Naive thymus-derived CD4-positive, alpha-beta T cell (primary cell): ENCODE measurements at regions of chr19 and their contacts with region 1.

Region 1: GRCh38 chr19:3035542-3036118 is 6.5 kb upstream of the TLE2 start:
- DNase-seq: peak; percentile 77 to 97 (median 95)
- ATAC-seq: peak; percentile 95
- H3K4me3 ChIP-seq: peak overlapping the region; percentile 95
- H3K4me3 Mint-ChIP-seq: peak overlapping the region; percentile 88 to 97 (median 94)
- H3K27ac ChIP-seq: peak overlapping the region; percentile 76
- H3K27ac Mint-ChIP-seq: peak overlapping the region; percentile 92 to 99 (median 98)
- H3K4me1 ChIP-seq: peaks cover 11 to 16% of the 10 kb centered on the region in 2 donors
- H3K4me1 Mint-ChIP-seq: peaks cover 21 to 44% (median 31%) of the 10 kb centered on the region in 7 donors
- H3K27me3 ChIP-seq: no peaks in the 10 kb centered on the region
- H3K27me3 Mint-ChIP-seq: peaks cover 0 to 41% (median 0%) of the 10 kb centered on the region in 5 donors

Region 2: GRCh38 chr19:2517868-2518625 is 517.6 kb before region 1 on chr19:
- CTCF ChIA-PET with region 1: no interaction called
- POLR2A ChIA-PET with region 1: no interaction called
- intact Hi-C with region 1: no loop called
- DNase-seq: peak in 1 of 9 donors; percentile 16
- ATAC-seq: no peak
- H3K4me3 ChIP-seq: no peak overlapping the region
- H3K4me3 Mint-ChIP-seq: peak overlapping the region in 3 of 10 donors; percentile 25 to 31 (median 29)
- H3K27ac ChIP-seq: no peak overlapping the region
- H3K27ac Mint-ChIP-seq: no peak overlapping the region
- H3K4me1 ChIP-seq: no peaks in the 10 kb centered on the region
- H3K4me1 Mint-ChIP-seq: peaks cover 0 to 8% (median 0%) of the 10 kb centered on the region in 7 donors
- H3K27me3 ChIP-seq: no peaks in the 10 kb centered on the region
- H3K27me3 Mint-ChIP-seq: no peaks in the 10 kb centered on the region

Region 3: DNA sequence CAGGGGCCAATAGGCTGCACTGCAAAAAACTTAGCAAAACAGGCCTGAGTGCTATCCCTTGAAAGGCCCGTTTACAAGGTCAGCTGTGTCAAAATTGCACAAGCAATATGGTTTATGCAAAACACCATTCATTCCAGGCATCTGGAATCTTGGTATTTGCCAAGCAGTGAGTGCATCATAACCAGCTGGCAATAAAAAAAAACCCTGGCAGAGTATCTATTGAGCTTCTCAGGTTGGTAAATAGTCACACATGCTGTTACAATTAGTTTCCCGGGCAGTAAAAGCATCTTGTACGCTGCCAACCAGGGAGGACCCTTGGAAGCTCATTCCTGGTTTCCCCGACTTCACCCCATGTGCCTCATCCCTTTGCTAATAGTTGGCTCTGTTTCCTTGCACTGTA is 112.1 kb before region 1 on chr19:
- CTCF ChIA-PET with region 1: no interaction called
- POLR2A ChIA-PET with region 1: no interaction called
- intact Hi-C with region 1: no loop called
- DNase-seq: no peak
- ATAC-seq: no peak
- H3K4me3 ChIP-seq: no peak overlapping the region
- H3K4me3 Mint-ChIP-seq: no peak overlapping the region
- H3K27ac ChIP-seq: no peak overlapping the region
- H3K27ac Mint-ChIP-seq: no peak overlapping the region
- H3K4me1 ChIP-seq: no peaks in the 10 kb centered on the region
- H3K4me1 Mint-ChIP-seq: no peaks in the 10 kb centered on the region
- H3K27me3 ChIP-seq: no peaks in the 10 kb centered on the region
- H3K27me3 Mint-ChIP-seq: no peaks in the 10 kb centered on the region

Region 4: GRCh38 chr19:2977001-2977685 is 58.5 kb before region 1 on chr19 and contains the start of gene TLE6:
- CTCF ChIA-PET with region 1: no interaction called
- POLR2A ChIA-PET with region 1: interaction called, 20 read pairs
- intact Hi-C with region 1: loop called (anchors 1 to 2 kb)
- DNase-seq: peak; percentile 82 to 94 (median 93)
- ATAC-seq: peak; percentile 99
- H3K4me3 ChIP-seq: peak within 1 kb of the TSS; percentile 75
- H3K4me3 Mint-ChIP-seq: peak within 1 kb of the TSS; percentile 88 to 98 (median 95)
- H3K27ac ChIP-seq: peak within 1 kb of the TSS; percentile 44
- H3K27ac Mint-ChIP-seq: peak within 1 kb of the TSS; percentile 63 to 95 (median 88)
- H3K4me1 ChIP-seq: peaks cover 10 to 12% of the 10 kb centered on the region in 2 donors
- H3K4me1 Mint-ChIP-seq: peaks cover 0 to 24% (median 18%) of the 10 kb centered on the region in 7 donors
- H3K27me3 ChIP-seq: no peaks in the 10 kb centered on the region
- H3K27me3 Mint-ChIP-seq: peaks cover 3 to 22% (median 9%) of the 10 kb centered on the region in 5 donors
- total RNA-seq, gene TLE6: 0.60 to 0.64 TPM in 2 of 5 experiments, not detected in the others

Region 5: GRCh38 chr19:3047425-3048189 is 12.0 kb after region 1 on chr19:
- CTCF ChIA-PET with region 1: interaction called, 5 read pairs
- POLR2A ChIA-PET with region 1: interaction called, 359 read pairs
- intact Hi-C with region 1: loop called in 1 of 2 experiments (anchors 1 kb)
- DNase-seq: peak; percentile 46 to 85 (median 80)
- ATAC-seq: peak; percentile 93
- H3K4me3 ChIP-seq: peak overlapping the region; percentile 51
- H3K4me3 Mint-ChIP-seq: peak overlapping the region; percentile 87 to 100 (median 96)
- H3K27ac ChIP-seq: peak overlapping the region; percentile 66
- H3K27ac Mint-ChIP-seq: peak overlapping the region; percentile 41 to 99 (median 98)
- H3K4me1 ChIP-seq: peaks cover 4 to 7% of the 10 kb centered on the region in 2 donors
- H3K4me1 Mint-ChIP-seq: peaks cover 10 to 46% (median 35%) of the 10 kb centered on the region in 7 donors
- H3K27me3 ChIP-seq: no peaks in the 10 kb centered on the region
- H3K27me3 Mint-ChIP-seq: peaks cover 0 to 16% (median 0%) of the 10 kb centered on the region in 5 donors

Region 6: DNA sequence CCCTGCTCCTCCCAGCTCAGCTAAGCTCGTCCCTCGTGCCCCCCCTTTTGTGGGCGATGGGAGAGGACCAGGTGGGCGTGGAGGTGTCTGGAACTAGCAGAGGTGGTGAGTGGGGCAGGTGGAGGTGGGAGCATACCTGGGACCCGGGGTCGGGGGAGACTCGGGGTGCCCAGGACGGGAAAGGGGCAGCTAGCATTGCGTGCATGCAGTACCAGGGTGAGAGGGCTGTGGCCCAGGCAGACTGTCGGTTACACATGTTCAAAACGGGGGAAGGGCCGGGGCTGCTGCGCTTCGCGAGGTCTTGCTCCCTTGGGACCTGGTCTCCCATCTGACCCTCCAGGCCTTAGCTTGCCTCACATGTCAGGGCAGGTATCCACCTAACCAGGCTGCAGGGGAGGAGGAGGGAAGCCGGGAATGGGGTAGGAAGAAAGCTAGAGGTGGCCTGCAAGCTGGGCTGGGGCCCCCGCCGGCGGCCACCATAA is 17.6 kb after region 1 on chr19:
- CTCF ChIA-PET with region 1: interaction called, 5 read pairs
- POLR2A ChIA-PET with region 1: interaction called, 359 read pairs
- intact Hi-C with region 1: loop called in 1 of 2 experiments (anchors 2 kb)
- DNase-seq: no peak
- ATAC-seq: peak; percentile 15
- H3K4me3 ChIP-seq: no peak overlapping the region
- H3K4me3 Mint-ChIP-seq: peak overlapping the region in 2 of 10 donors; percentile 32 to 46
- H3K27ac ChIP-seq: peak overlapping the region; percentile 35
- H3K27ac Mint-ChIP-seq: peak overlapping the region in 6 of 9 donors; percentile 67 to 93 (median 83)
- H3K4me1 ChIP-seq: peaks cover 0 to 43% of the 10 kb centered on the region in 2 donors
- H3K4me1 Mint-ChIP-seq: peaks cover 23 to 57% (median 38%) of the 10 kb centered on the region in 7 donors
- H3K27me3 ChIP-seq: no peaks in the 10 kb centered on the region
- H3K27me3 Mint-ChIP-seq: peaks cover 0 to 4% (median 0%) of the 10 kb centered on the region in 5 donors

Region 7: DNA sequence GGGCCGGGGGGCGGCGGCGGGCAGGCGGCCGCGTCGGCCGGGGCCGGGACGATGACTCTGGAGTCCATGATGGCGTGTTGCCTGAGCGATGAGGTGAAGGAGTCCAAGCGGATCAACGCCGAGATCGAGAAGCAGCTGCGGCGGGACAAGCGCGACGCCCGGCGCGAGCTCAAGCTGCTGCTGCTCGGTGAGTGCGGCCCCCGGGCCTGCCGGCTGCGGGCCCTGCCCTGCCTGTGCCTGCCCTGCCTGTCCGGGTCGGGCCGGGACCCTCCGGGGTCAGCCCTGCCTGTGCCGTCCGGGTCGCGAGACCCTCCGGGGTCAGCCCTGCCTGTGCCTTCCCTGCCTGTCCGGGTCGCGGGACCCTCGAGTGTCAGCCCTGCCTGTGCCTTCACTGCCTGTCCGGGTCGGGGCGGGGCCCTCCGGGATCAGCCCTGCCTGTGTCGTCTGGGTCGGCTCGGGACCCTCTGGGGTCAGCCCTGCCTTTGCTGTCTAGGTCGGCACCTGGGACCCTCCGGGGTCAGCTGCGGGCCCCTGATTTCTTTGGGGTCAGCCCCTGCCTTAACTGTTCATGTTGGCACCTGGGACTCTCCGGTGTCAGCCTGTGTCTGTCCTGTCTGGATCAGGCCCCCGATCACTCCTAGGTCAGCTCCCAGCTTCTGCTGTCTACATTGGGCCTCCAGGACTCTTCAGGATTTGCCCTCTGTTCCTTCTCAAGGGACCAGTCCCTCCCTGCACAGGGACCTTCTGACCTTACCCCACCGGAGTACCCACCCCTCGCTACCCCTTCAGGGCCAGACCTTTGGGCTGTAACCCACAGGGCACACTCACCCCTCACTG is 59.2 kb after region 1 on chr19:
- CTCF ChIA-PET with region 1: no interaction called
- POLR2A ChIA-PET with region 1: interaction called, 3 read pairs
- intact Hi-C with region 1: loop called in 1 of 2 experiments (anchors 2 kb)
- DNase-seq: peak in 3 of 9 donors; percentile 27 to 45 (median 30)
- ATAC-seq: peak; percentile 10
- H3K4me3 ChIP-seq: peak overlapping the region; percentile 48
- H3K4me3 Mint-ChIP-seq: peak overlapping the region; percentile 59 to 93 (median 86)
- H3K27ac ChIP-seq: peak overlapping the region; percentile 52
- H3K27ac Mint-ChIP-seq: peak overlapping the region in 8 of 9 donors; percentile 37 to 91 (median 72)
- H3K4me1 ChIP-seq: peaks cover 20 to 36% of the 10 kb centered on the region in 2 donors
- H3K4me1 Mint-ChIP-seq: peaks cover 14 to 39% (median 28%) of the 10 kb centered on the region in 7 donors
- H3K27me3 ChIP-seq: peaks cover 0 to 5% of the 10 kb centered on the region in 2 donors
- H3K27me3 Mint-ChIP-seq: peaks cover 0 to 43% (median 5%) of the 10 kb centered on the region in 5 donors

Region 8: DNA sequence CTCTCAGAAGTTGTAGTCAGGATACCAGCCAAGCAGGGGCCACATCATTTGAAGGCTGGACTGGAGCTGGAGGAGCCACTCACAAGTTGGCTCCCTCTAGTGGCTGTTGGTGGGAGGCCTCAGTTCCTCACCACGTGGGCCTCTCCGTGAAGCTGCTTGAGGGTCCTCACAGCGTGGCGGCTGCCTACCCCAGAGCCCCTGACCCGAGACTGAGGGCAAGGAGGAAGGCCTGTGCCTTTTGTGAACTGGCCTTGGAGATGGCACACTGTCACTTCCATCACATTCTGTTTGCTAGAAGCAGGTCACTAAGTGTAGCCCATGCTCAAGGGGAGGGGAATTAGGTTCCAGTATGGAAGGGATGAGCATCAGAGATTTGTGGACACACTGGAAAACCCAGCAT is 73.1 kb after region 1 on chr19:
- CTCF ChIA-PET with region 1: interaction called, 10 read pairs
- POLR2A ChIA-PET with region 1: interaction called, 5 read pairs
- intact Hi-C with region 1: no loop called
- DNase-seq: peak in 8 of 9 donors; percentile 51 to 72 (median 65)
- ATAC-seq: peak; percentile 76
- H3K4me3 ChIP-seq: no peak overlapping the region
- H3K4me3 Mint-ChIP-seq: peak overlapping the region in 1 of 10 donors; percentile 46
- H3K27ac ChIP-seq: no peak overlapping the region
- H3K27ac Mint-ChIP-seq: peak overlapping the region in 5 of 9 donors; percentile 43 to 70 (median 57)
- H3K4me1 ChIP-seq: peaks cover 8% of the 10 kb centered on the region in 2 donors
- H3K4me1 Mint-ChIP-seq: peaks cover 4 to 15% (median 11%) of the 10 kb centered on the region in 7 donors
- H3K27me3 ChIP-seq: no peaks in the 10 kb centered on the region
- H3K27me3 Mint-ChIP-seq: peaks cover 0 to 2% (median 0%) of the 10 kb centered on the region in 5 donors